ENCODE measurements at regions of chrX and their contacts with region 1.

Region 1: GRCh38 chrX:2811271-2811670 is 17.5 kb upstream of the GYG2 start:
- DNase-seq: no peak
- ATAC-seq: no peak
- H3K4me3 Mint-ChIP-seq: no peak overlapping the region
- H3K27ac Mint-ChIP-seq: no peak overlapping the region
- H3K4me1 Mint-ChIP-seq: peaks cover 3% of the 10 kb centered on the region
- H3K27me3 Mint-ChIP-seq: peaks cover 11% of the 10 kb centered on the region
- CTCF ChIP-seq: no peak

Region 2: DNA sequence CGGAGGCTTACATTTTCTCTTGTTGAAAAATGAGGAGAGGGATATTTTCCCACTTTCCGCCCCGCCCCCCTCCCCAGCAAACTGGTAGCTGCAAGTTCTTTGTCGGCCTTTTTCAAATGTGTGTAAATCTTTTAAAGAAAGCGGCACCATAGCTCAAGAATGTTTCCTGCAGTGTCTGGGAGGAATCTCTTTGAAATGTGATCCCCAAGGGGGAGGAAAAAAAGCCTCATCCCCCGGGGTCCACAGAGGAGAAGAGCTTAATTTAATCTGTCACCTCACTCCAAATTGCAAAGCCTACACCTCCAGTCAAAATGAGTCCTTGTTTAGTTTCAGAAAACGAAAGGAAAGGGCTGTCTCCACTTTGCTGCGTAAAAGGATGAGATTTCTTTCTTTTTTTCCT is 1161.7 kb before region 1 on chrX:
- CTCF ChIA-PET with region 1: no interaction called
- POLR2A ChIA-PET with region 1: no interaction called
- intact Hi-C with region 1: loop called (anchors 5 kb)
- DNase-seq: no peak
- ATAC-seq: no peak
- H3K4me3 Mint-ChIP-seq: no peak overlapping the region
- H3K27ac Mint-ChIP-seq: no peak overlapping the region
- H3K4me1 Mint-ChIP-seq: peaks cover 8% of the 10 kb centered on the region
- H3K27me3 Mint-ChIP-seq: peaks cover 9% of the 10 kb centered on the region
- CTCF ChIP-seq: no peak

Measured in activated B cell treated with CpG ODN at 0.5 μM for 24 hours (primary cell).